ENCODE measurements at regions of chr11 and their contacts with region 1.

Region 1: DNA sequence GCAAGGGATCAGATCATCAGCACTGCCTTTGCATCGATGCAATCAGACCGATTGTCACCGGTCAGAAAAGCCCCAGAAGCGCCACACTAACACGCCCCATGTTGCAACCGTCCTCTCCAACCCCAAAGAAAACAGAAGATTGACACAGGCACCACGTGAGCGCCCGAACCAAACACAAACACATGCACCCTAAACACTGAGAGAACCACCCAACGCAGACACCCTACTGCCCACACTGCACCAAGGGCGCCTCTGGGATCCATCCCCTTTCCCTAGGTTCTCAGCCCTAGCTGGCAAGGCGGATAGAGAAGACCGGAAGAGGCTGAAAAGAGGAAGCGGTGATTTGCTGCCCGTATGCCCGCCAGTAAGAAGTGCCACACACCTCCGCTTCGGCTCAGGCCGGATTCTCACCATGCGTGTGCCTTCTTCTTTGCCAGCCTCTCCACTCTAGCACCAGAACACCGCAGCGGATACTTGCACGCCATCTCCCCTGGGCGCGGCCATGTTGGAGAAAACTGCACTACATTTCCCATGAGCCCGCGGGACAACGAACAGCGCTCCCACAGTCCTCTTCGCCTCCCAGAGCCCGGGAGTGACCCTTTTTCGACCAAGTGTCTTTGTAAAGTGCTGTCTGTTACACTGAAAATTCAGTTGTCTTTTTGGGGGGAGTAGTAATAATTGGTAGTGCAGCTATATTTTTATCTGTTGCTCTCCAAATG is at the start of gene ALKBH8:
- DNase-seq: peak; percentile 76 to 83
- H3K4me3 ChIP-seq: peak within 1 kb of the TSS; percentile 68 to 81
- H3K27ac ChIP-seq: peak within 1 kb of the TSS; percentile 73 to 78
- H3K4me1 ChIP-seq: peaks cover 0 to 27% (median 9%) of the 10 kb centered on the region in 4 donors
- H3K27me3 ChIP-seq: no peaks in the 10 kb centered on the region
- CTCF ChIP-seq: no peak

Region 2: GRCh38 chr11:108008656-108009496 is 443.5 kb after region 1 on chr11 and contains the start of gene CUL5:
- intact Hi-C with region 1: loop called (anchors 10 kb)
- DNase-seq: peak; percentile 91 to 95
- H3K4me3 ChIP-seq: peak within 1 kb of the TSS; percentile 71 to 72
- H3K27ac ChIP-seq: peak within 1 kb of the TSS; percentile 98
- H3K4me1 ChIP-seq: peaks cover 0 to 36% (median 24%) of the 10 kb centered on the region in 4 donors
- H3K27me3 ChIP-seq: no peaks in the 10 kb centered on the region
- CTCF ChIP-seq: peak; percentile 85

Measured in tibial artery (tissue), 4 donors.